K562 (cell line): ENCODE measurements at regions of chr11 and their contacts with region 1.

Region 1: DNA sequence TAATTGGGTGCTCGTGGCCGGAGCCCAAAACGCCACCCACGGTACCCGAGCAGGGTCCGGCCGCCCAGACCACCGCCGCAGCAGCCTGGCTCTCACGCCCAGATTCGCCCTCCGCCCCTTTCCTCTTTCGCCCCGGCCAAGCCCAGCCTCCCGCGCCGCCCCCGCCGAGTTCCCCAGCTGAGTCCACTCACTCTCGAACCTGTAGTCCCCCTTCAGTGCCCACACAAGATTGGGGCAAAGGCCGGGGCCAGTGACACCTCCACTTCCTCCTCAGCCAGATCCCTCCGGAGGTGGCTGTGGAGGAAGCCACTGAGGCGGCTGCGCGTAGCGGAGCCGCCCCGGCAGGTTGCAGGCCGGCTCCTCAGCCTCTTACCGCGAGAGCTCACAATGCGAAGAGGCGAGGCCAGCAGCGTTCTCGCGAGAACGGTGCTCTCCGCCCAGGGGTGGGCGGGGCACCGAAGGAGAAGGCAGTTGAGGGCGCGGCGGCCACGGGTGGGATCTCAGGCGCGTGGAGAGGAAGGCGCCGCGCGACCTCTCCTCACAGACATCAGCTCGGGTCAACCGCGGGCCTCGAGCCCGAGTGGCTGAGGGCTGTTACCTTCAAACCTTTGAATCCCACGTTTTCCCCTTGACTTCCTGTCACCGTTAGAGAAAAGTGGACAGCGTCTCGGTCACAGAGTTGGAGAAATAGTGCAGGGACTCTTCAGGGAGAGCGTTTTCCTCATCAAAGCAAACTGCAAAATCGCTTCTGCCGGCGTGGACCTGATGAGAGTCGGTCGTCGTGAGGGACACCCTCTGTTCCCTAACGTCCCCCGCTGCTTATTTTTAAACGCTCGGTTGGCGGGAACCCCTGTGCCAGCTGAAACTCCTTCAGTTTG is at the start of gene BTBD10:
- DNase-seq: peak; percentile 92 to 97 (median 94)
- ATAC-seq: peak; percentile 100
- H3K4me3 ChIP-seq: peak within 1 kb of the TSS; percentile 91
- H3K27ac ChIP-seq: peak within 1 kb of the TSS; percentile 79
- H3K4me1 ChIP-seq: peaks cover 8 to 14% of the 10 kb centered on the region in 2 experiments
- H3K27me3 ChIP-seq: no peaks in the 10 kb centered on the region
- CTCF ChIP-seq: peak in 1 of 3 experiments; percentile 50; a peak in 2 of 6 replicates
- EP300 ChIP-seq: 0 out of 2 replicates have a peak, but pooled peaks have one; percentile 25
- POLR2A ChIP-seq: peak; percentile 97
- RAD21 ChIP-seq: no peak
- polyA plus RNA-seq, gene BTBD10: 13.4 to 21.4 TPM

Region 2: DNA sequence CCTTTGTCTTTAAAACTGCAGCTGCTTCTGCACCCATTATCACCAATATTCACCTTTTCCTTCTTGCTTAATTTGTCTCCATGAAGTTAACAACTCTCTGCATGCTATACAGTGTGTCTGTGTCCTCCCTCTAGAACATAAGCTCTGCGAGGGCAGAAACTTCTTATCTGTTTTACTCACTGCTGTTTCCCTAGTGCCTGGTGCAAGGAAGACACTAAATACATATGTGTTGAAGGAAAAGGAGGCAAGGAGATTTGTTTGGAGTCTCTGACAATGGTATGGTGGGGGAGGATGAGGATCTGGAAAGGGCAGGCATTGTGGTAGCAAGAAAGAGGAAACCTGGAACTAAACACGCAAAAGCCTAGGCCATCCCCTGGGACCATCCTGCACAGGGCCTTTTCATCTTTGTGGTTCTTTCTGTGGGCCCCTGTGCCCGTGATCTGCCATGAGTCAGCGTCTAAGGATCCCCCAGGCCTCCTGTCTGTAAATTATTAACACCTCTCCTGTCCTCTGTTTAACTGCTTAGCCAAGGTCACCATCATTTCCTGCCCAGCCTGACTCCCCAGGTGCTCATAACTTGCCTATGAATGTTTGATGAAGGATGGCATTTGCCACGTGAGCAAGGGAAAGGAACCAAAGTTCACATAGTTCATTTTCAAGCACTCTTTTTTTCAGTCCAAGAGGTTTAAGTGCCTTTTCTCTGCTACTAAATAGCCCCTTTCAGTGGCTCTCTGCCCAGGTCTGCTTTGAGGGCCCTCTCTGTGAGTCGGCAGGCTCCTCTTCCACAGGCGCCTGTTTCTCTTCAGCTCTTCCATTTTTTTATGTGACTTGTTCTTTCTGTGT is 322.9 kb before region 1 on chr11:
- CTCF ChIA-PET with region 1: no interaction called
- POLR2A ChIA-PET with region 1: no interaction called
- in situ Hi-C with region 1: no loop called
- intact Hi-C with region 1: no loop called
- DNase-seq: no peak
- ATAC-seq: no peak
- H3K4me3 ChIP-seq: no peak overlapping the region
- H3K27ac ChIP-seq: no peak overlapping the region
- H3K4me1 ChIP-seq: peaks cover 11 to 22% of the 10 kb centered on the region in 2 experiments; a peak in 4 of 5 replicates
- H3K27me3 ChIP-seq: no peaks in the 10 kb centered on the region; a peak in 1 of 5 replicates
- CTCF ChIP-seq: no peak
- EP300 ChIP-seq: no peak
- POLR2A ChIP-seq: no peak
- RAD21 ChIP-seq: no peak

Region 3: GRCh38 chr11:13354335-13354734 is 108.8 kb before region 1 on chr11:
- CTCF ChIA-PET with region 1: no interaction called
- POLR2A ChIA-PET with region 1: no interaction called
- in situ Hi-C with region 1: no loop called
- intact Hi-C with region 1: loop called (anchors 10 kb)
- DNase-seq: peak; percentile 19 to 41 (median 23)
- ATAC-seq: peak; percentile 82
- H3K4me3 ChIP-seq: no peak overlapping the region
- H3K27ac ChIP-seq: no peak overlapping the region
- H3K4me1 ChIP-seq: 0 out of 5 replicates have a peak, but pooled peaks cover 0 to 3% of the 10 kb centered on the region in 2 experiments
- H3K27me3 ChIP-seq: peaks cover 18 to 29% of the 10 kb centered on the region in 2 experiments; a peak in 3 of 5 replicates
- CTCF ChIP-seq: peak; percentile 33 to 68 (median 52); a peak in 5 of 6 replicates
- EP300 ChIP-seq: no peak
- POLR2A ChIP-seq: no peak
- RAD21 ChIP-seq: peak; percentile 20 to 68; a peak in 2 of 4 replicates

Region 4: DNA sequence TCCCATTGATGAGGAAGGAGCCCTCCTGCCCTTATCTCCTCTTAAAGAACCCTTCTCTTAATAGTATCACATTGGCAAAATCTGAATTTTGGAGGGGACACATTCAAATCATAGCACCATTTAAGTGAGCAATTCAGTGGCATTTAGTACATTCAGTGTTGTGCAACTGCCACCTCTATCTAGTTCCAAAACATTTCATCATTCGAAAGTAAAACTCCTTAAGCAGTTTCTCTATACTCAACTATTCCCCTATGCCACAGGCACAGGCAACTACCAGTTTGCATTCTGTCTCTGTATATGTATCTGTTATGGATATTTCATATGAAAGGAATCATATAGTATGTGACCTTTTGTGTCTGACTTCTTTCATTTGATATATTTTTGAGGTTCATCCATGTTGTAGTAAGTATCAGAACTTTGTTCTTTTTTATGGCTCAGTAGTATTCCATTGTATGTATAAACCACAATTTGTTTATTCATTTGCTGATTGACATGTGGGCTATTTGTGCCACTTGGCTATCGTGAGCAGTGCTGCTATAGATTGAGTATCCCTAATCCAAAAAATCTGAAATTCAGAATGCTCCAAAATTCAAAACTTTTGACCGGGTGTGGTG is 228.3 kb after region 1 on chr11:
- CTCF ChIA-PET with region 1: no interaction called
- POLR2A ChIA-PET with region 1: no interaction called
- in situ Hi-C with region 1: no loop called
- intact Hi-C with region 1: loop called (anchors 10 kb)
- DNase-seq: no peak
- ATAC-seq: no peak
- H3K4me3 ChIP-seq: no peak overlapping the region
- H3K27ac ChIP-seq: no peak overlapping the region
- H3K4me1 ChIP-seq: peaks cover 0 to 13% of the 10 kb centered on the region in 2 experiments; a peak in 2 of 5 replicates
- H3K27me3 ChIP-seq: no peaks in the 10 kb centered on the region
- CTCF ChIP-seq: no peak
- EP300 ChIP-seq: no peak
- POLR2A ChIP-seq: no peak
- RAD21 ChIP-seq: no peak